Caco-2 (cell line): ENCODE measurements at regions of chr16 and their contacts with region 1.

Region 1: DNA sequence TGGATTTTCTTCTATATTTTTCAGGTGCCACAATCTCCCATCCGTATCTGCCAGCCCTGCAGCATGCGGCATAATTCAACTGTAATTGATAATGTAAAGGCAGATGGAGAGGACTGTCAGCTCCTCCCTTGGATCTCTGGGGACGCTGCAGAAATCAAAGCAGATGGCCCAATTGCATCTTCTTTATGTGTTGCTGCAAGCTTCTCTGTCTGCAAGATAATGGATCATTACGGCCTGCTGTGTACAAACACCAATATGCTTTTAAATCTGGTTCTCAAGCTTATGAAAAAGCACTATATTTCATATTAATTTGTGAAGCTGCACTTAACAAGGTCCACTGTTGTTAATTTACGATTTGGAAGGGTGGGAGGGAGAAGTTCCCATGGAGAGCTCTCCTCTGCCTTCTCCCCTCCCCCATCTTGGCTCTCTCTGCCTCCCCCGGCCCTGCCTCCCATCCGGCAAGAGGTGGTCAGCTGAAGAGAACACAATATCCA is 607.5 kb downstream of the TOX3 start:
- DNase-seq: no peak
- H3K4me3 ChIP-seq: no peak overlapping the region
- H3K4me3 Mint-ChIP-seq: no peak overlapping the region
- H3K27ac Mint-ChIP-seq: no peak overlapping the region
- H3K4me1 ChIP-seq: no peaks in the 10 kb centered on the region
- H3K4me1 Mint-ChIP-seq: peaks cover under 1% of the 10 kb centered on the region
- H3K27me3 ChIP-seq: no peaks in the 10 kb centered on the region
- H3K27me3 Mint-ChIP-seq: peaks cover 3% of the 10 kb centered on the region
- CTCF ChIP-seq: no peak

Region 2: DNA sequence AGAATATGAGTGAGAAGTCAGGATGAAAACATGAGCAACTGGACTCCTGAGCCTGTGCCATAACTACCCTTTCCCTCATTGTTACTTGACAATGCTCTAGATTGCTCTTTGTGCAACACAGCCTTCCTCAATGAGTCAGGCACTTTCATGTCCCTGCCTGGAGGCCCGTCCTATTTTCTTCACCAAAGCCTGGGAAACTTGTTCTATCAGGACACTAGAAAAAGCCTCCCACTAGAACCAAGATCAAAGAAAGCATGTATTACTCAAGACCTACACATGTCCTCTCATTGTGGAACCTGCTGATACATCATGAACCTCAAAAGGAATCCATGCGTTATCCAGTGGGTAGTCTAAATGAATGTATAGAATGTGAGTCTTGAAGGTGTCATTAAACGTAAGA is 16.9 kb before region 1 on chr16:
- CTCF ChIA-PET with region 1: no interaction called
- POLR2A ChIA-PET with region 1: interaction called, 12 read pairs
- intact Hi-C with region 1: no loop called
- DNase-seq: peak in 1 of 2 experiments; percentile 12
- H3K4me3 ChIP-seq: no peak overlapping the region
- H3K4me3 Mint-ChIP-seq: no peak overlapping the region
- H3K27ac Mint-ChIP-seq: no peak overlapping the region
- H3K4me1 ChIP-seq: peaks cover 21% of the 10 kb centered on the region
- H3K4me1 Mint-ChIP-seq: peaks cover 31% of the 10 kb centered on the region
- H3K27me3 ChIP-seq: no peaks in the 10 kb centered on the region
- H3K27me3 Mint-ChIP-seq: no peaks in the 10 kb centered on the region
- CTCF ChIP-seq: no peak

Region 3: DNA sequence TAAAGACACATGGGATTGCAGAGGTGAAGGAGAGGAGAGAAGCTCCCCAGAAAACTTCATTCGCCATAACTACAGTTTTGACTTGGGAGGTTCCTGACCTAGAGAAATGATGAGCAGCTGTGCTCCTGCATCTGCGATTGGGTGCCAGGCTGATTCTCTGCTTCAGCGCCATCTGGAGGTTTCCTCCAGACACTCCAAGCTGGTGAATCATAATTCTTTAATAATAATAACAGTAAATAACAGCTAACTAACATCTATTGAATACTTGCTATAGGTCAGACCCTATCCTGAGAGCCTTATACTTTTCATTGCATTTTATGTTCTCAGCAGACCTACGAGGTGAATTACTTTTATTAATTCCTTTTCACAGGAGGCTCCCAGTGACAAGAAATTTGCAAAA is 31.8 kb after region 1 on chr16:
- CTCF ChIA-PET with region 1: no interaction called
- POLR2A ChIA-PET with region 1: no interaction called
- intact Hi-C with region 1: no loop called
- DNase-seq: peak in 1 of 2 experiments; percentile 27
- H3K4me3 ChIP-seq: no peak overlapping the region
- H3K4me3 Mint-ChIP-seq: no peak overlapping the region
- H3K27ac Mint-ChIP-seq: no peak overlapping the region
- H3K4me1 ChIP-seq: no peaks in the 10 kb centered on the region
- H3K4me1 Mint-ChIP-seq: no peaks in the 10 kb centered on the region
- H3K27me3 ChIP-seq: no peaks in the 10 kb centered on the region
- H3K27me3 Mint-ChIP-seq: peaks cover 11% of the 10 kb centered on the region
- CTCF ChIP-seq: peak; percentile 41 to 43